A673 (cell line): ENCODE measurements at regions of chr12 and their contacts with region 1.

Region 1: DNA sequence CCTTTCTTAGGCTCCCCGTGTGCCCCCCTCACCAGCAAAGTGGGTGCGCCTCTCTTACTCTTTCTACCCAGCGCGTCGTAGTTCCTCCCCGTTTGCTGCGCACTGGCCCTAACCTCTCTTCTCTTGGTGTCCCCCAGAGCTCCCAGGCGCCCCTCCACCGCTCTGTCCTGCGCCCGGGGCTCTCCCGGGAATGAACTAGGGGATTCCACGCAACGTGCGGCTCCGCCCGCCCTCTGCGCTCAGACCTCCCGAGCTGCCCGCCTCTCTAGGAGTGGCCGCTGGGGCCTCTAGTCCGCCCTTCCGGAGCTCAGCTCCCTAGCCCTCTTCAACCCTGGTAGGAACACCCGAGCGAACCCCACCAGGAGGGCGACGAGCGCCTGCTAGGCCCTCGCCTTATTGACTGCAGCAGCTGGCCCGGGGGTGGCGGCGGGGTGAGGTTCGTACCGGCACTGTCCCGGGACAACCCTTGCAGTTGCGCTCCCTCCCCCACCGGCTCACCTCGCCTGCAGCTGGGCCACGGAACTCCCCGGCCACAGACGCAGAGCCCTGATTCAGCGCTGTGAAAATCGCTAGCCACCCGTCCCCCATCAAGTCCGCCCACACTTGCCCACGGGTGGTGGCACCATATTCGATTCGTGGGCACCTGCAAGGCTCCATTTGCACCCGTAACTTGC is 1.3 kb downstream of the TMEM233 start:
- DNase-seq: peak; percentile 70
- H3K4me3 ChIP-seq: peak overlapping the region; percentile 73
- H3K27ac ChIP-seq: peak overlapping the region; percentile 93
- H3K4me1 ChIP-seq: peaks cover 42% of the 10 kb centered on the region
- H3K27me3 ChIP-seq: no peaks in the 10 kb centered on the region
- CTCF ChIP-seq: no peak

Region 2: GRCh38 chr12:119450771-119451170 is 144.1 kb before region 1 on chr12:
- CTCF ChIA-PET with region 1: no interaction called
- POLR2A ChIA-PET with region 1: no interaction called
- intact Hi-C with region 1: no loop called
- DNase-seq: no peak
- H3K4me3 ChIP-seq: no peak overlapping the region
- H3K27ac ChIP-seq: no peak overlapping the region
- H3K4me1 ChIP-seq: peaks cover 5% of the 10 kb centered on the region
- H3K27me3 ChIP-seq: peaks cover 6% of the 10 kb centered on the region
- CTCF ChIP-seq: no peak

Region 3: DNA sequence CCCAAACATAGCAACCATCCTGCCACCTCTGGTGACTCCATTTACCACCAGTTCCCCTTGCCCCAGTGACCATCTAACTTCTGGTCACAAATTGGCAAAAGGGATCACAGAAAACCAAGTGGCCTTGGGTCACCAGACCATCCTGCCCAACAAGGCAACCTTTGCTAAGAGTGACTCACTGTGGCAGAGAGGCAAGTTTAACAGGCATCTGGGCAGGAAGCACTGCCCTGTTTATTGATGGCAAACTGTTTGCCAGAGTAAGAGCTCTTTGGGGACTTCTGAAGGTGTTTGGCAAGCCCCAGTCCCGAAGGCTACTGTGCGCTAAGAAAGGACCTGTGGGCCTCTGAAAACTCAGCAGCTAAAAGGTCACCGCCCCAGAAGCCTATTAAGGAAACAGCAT is 29.5 kb before region 1 on chr12:
- CTCF ChIA-PET with region 1: no interaction called
- POLR2A ChIA-PET with region 1: no interaction called
- intact Hi-C with region 1: no loop called
- DNase-seq: no peak
- H3K4me3 ChIP-seq: no peak overlapping the region
- H3K27ac ChIP-seq: no peak overlapping the region
- H3K4me1 ChIP-seq: no peaks in the 10 kb centered on the region
- H3K27me3 ChIP-seq: no peaks in the 10 kb centered on the region
- CTCF ChIP-seq: no peak

Region 4: GRCh38 chr12:119624966-119625365 is 30.1 kb after region 1 on chr12:
- CTCF ChIA-PET with region 1: no interaction called
- POLR2A ChIA-PET with region 1: interaction called, 8 read pairs
- intact Hi-C with region 1: loop called (anchors 1 kb)
- DNase-seq: peak; percentile 98
- H3K4me3 ChIP-seq: no peak overlapping the region
- H3K27ac ChIP-seq: peak overlapping the region; percentile 66
- H3K4me1 ChIP-seq: peaks cover 63% of the 10 kb centered on the region
- H3K27me3 ChIP-seq: no peaks in the 10 kb centered on the region
- CTCF ChIP-seq: no peak

Region 5: GRCh38 chr12:119649202-119649808 is 54.4 kb after region 1 on chr12:
- CTCF ChIA-PET with region 1: no interaction called
- POLR2A ChIA-PET with region 1: interaction called, 4 read pairs
- intact Hi-C with region 1: loop called (anchors 1 kb)
- DNase-seq: peak; percentile 66
- H3K4me3 ChIP-seq: no peak overlapping the region
- H3K27ac ChIP-seq: no peak overlapping the region
- H3K4me1 ChIP-seq: no peaks in the 10 kb centered on the region
- H3K27me3 ChIP-seq: no peaks in the 10 kb centered on the region
- CTCF ChIP-seq: peak; percentile 88